GM12878 (cell line): ENCODE measurements at regions of chr15 and their contacts with region 1.

Region 1: DNA sequence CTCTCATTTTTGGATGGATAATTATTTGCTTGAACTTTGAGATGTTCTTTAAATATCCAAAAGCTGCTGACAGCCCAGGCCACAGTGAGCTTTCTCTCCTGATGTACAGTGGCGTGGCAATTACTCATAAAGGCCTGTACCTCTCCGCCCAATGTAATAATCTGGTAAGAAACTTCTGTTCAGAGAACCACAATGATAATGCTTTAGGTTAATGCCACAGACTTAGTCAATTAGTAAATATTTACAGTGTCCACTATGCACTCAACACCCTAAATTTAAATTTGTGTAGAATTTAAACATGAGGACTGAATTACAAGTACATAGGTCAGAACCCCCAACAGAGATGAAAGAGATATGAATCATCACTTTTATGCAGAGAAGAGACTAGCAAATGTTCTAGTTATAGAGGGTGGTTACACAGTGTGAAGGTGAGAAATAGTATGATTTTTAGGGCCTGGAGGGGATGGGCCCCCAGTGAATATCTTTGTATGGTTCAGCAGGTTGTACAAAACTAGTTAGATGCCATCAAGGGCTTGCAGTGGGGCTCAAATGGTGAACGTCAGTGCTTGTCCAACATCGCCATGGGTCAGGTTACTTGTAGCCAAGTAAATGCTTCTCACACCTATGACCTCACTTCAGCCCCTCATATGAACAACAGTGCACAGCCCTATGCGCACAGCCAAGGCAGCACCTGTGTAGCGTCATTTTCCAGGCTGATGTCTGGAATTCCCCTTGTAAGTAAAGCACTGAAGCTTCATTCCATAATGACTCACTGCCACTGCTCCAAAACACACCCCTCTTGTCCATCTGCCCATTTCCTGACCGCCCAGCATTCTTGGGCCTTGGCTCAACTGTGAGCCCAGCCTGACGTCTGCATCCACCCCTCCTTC is 13.3 kb downstream of the ABHD2 start:
- DNase-seq: no peak
- ATAC-seq: peak; percentile 81
- H3K4me3 ChIP-seq: no peak overlapping the region
- H3K27ac ChIP-seq: peak overlapping the region; percentile 10; the same call in 1 of the 2 replicates
- H3K4me1 ChIP-seq: peaks cover 9% of the 10 kb centered on the region; the same call in 1 of the 2 replicates
- H3K27me3 ChIP-seq: no peaks in the 10 kb centered on the region
- CTCF ChIP-seq: no peak
- EP300 ChIP-seq: no peak
- POLR2A ChIP-seq: no peak
- RAD21 ChIP-seq: no peak

Region 2: DNA sequence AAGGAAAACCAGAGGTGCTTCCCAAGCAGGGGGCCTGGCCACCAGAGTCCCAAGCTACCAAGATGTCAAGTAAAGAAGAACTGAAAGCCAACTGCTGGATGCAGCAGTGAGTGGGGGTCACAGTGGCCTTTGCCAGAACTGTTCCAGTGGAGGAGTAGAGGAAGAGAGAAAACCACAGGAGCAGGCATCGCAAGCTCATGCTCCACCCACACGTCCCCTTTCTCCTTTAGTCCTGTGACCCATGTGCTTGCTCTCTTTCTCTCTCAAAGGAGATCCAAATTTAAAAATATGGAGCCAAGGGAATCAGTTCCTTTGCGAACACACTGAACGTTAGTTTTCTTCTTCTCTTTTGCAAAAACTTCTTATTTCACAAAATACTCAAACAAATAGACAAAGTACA is 25.7 kb before region 1 on chr15:
- CTCF ChIA-PET with region 1: interaction called, 4 read pairs
- POLR2A ChIA-PET with region 1: no interaction called
- RAD21 ChIA-PET with region 1: no interaction called
- SMC1A ChIA-PET with region 1: interaction called, 12 read pairs
- in situ Hi-C with region 1: no loop called
- intact Hi-C with region 1: no loop called
- DNase-seq: no peak
- ATAC-seq: no peak
- H3K4me3 ChIP-seq: no peak overlapping the region
- H3K27ac ChIP-seq: no peak overlapping the region
- H3K4me1 ChIP-seq: no peaks in the 10 kb centered on the region
- H3K27me3 ChIP-seq: no peaks in the 10 kb centered on the region
- CTCF ChIP-seq: no peak
- EP300 ChIP-seq: no peak
- POLR2A ChIP-seq: no peak
- RAD21 ChIP-seq: no peak

Region 3: DNA sequence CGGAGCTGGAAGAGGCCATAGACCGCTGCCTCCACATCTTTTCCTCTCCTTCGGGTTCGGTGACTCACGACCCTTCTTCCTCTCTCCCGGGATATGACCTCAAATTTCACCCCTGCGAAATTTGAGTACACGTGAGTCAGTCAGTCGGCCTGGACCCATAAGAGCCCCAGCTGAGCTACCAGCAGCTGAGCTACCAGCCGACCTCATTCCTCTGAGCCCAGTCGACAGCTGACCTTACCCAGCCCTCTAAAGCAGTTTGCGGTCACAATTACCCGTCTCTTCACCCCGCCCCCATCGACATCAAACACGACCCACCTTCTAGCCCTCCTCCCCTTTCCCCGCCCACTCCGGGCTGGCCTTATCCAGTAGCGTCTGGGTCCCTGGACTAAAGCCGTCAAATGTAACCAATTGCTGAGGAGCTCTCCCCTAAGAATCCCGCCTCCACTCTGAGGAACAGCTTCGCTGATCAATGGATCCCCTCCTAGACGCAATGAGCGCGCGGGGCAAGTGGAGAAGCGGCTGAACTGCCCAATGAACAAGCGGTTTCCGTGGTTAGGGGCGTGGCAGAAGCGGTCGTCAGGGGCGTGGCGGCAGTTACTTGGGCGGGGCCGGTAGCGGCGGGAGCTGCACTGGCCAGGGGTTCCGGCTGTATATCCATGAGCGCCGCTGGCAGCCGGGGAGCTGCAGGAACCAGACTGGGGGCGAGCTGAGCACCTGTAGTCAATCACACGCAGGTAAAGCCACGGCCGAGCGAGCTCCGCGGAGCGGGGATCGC is 13.5 kb before region 1 on chr15 and contains the start of gene ABHD2:
- CTCF ChIA-PET with region 1: interaction called, 72 read pairs
- POLR2A ChIA-PET with region 1: interaction called, 122 read pairs
- RAD21 ChIA-PET with region 1: interaction called, 56 read pairs
- SMC1A ChIA-PET with region 1: interaction called, 113 read pairs
- in situ Hi-C with region 1: no loop called
- intact Hi-C with region 1: no loop called
- DNase-seq: peak; percentile 99
- ATAC-seq: peak; percentile 96
- H3K4me3 ChIP-seq: peak within 1 kb of the TSS; percentile 88
- H3K27ac ChIP-seq: peak within 1 kb of the TSS; percentile 56
- H3K4me1 ChIP-seq: no peaks in the 10 kb centered on the region; the same call in 1 of the 2 replicates
- H3K27me3 ChIP-seq: no peaks in the 10 kb centered on the region
- CTCF ChIP-seq: no peak
- EP300 ChIP-seq: 0 out of 4 replicates have a peak, but pooled peaks of 1 of the 2 experiments have one; percentile 28
- POLR2A ChIP-seq: peak; percentile 84
- RAD21 ChIP-seq: no peak
- polyA plus RNA-seq, gene ABHD2: 1.2 to 4.7 TPM

Region 4: GRCh38 chr15:89112341-89112971 is 10.9 kb after region 1 on chr15:
- CTCF ChIA-PET with region 1: interaction called, 57 read pairs
- POLR2A ChIA-PET with region 1: interaction called, 20 read pairs
- RAD21 ChIA-PET with region 1: interaction called, 17 read pairs
- SMC1A ChIA-PET with region 1: interaction called, 80 read pairs
- in situ Hi-C with region 1: no loop called
- intact Hi-C with region 1: no loop called
- DNase-seq: peak; percentile 38
- ATAC-seq: peak; percentile 99
- H3K4me3 ChIP-seq: no peak overlapping the region
- H3K27ac ChIP-seq: peak overlapping the region; percentile 23
- H3K4me1 ChIP-seq: peaks cover 8% of the 10 kb centered on the region; the same call in 1 of the 2 replicates
- H3K27me3 ChIP-seq: no peaks in the 10 kb centered on the region
- CTCF ChIP-seq: no peak
- EP300 ChIP-seq: peak; percentile 66 to 74; a peak in 3 of 4 replicates
- POLR2A ChIP-seq: no peak
- RAD21 ChIP-seq: no peak

Region 5: GRCh38 chr15:89139400-89140166 is 38.0 kb after region 1 on chr15:
- CTCF ChIA-PET with region 1: no interaction called
- POLR2A ChIA-PET with region 1: no interaction called
- RAD21 ChIA-PET with region 1: no interaction called
- SMC1A ChIA-PET with region 1: no interaction called
- in situ Hi-C with region 1: no loop called
- intact Hi-C with region 1: no loop called
- DNase-seq: no peak
- ATAC-seq: no peak
- H3K4me3 ChIP-seq: no peak overlapping the region
- H3K27ac ChIP-seq: no peak overlapping the region
- H3K4me1 ChIP-seq: no peaks in the 10 kb centered on the region
- H3K27me3 ChIP-seq: no peaks in the 10 kb centered on the region
- CTCF ChIP-seq: no peak
- EP300 ChIP-seq: no peak
- POLR2A ChIP-seq: no peak
- RAD21 ChIP-seq: no peak